MCF 10A (cell line): ENCODE measurements at regions of chr9 and their contacts with region 1.

Region 1: GRCh38 chr9:127611899-127612790 is at the start of gene STXBP1:
- DNase-seq: peak; percentile 81
- H3K4me3 Mint-ChIP-seq: peak within 1 kb of the TSS; percentile 86
- H3K27ac Mint-ChIP-seq: peak within 1 kb of the TSS; percentile 64
- H3K4me1 Mint-ChIP-seq: peaks cover 21% of the 10 kb centered on the region
- H3K27me3 Mint-ChIP-seq: no peaks in the 10 kb centered on the region
- CTCF ChIP-seq: no peak
- total RNA-seq, gene STXBP1: 20.0 and 36.6 TPM in 2 replicates

Region 2: GRCh38 chr9:127537792-127538191 is 74.4 kb before region 1 on chr9:
- CTCF ChIA-PET with region 1: no interaction called
- POLR2A ChIA-PET with region 1: no interaction called
- intact Hi-C with region 1: no loop called
- DNase-seq: peak; percentile 30
- H3K4me3 Mint-ChIP-seq: no peak overlapping the region
- H3K27ac Mint-ChIP-seq: no peak overlapping the region
- H3K4me1 Mint-ChIP-seq: peaks cover 25% of the 10 kb centered on the region
- H3K27me3 Mint-ChIP-seq: no peaks in the 10 kb centered on the region
- CTCF ChIP-seq: peak; percentile 39

Region 3: GRCh38 chr9:127595611-127596010 is 16.5 kb before region 1 on chr9:
- CTCF ChIA-PET with region 1: interaction called, 11 read pairs
- POLR2A ChIA-PET with region 1: interaction called, 14 read pairs
- intact Hi-C with region 1: no loop called
- DNase-seq: no peak
- H3K4me3 Mint-ChIP-seq: no peak overlapping the region
- H3K27ac Mint-ChIP-seq: no peak overlapping the region
- H3K4me1 Mint-ChIP-seq: peaks cover 10% of the 10 kb centered on the region
- H3K27me3 Mint-ChIP-seq: no peaks in the 10 kb centered on the region
- CTCF ChIP-seq: no peak

Region 4: DNA sequence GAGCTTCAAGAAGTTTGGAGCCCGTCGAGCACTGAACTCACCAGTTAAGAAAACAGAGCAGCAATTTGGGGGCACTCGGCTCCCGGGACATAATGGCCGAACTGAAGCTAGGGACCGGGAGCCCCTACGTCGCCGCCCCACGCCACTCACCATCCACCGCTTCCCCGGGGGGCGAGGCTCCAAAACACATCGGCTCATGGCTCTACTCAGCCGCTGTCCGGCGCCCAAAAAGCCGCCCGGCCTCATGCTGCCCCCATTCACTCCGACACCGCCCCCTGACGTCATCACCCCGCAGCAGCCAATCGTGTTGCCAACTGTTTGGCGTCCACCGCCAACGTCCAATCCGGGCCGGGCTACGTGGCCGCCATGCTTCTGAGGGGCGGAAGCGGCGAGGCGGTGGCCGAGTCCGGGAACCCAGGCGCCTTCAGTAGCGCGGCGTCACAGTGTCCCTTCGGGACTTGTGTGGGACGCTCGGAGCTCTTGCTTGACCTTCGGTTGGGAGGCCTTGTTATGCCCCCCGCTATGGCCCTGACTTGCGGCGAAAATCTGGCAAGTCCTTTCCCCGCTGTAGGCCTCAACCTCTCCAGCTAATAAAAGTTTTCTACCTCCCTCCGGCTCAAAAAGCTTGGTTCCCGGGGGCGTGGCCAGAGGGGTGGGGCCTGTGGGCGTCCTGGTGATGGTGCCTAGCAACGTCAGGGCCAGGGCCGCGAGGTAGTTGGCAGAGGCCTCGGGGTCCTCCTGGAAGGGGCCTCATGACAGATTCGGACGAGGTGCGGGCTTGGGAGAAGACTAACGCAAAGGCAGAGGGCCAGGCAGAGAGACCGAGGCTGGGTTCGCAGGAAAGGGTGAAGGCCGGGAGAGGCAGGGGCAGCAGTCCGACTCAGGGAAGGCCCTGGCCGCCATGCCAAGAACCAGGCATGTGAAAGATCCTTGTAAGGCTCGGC is 103.5 kb after region 1 on chr9 and contains the starts of genes PTRH1 and TTC16:
- CTCF ChIA-PET with region 1: no interaction called
- POLR2A ChIA-PET with region 1: interaction called, 13 read pairs
- intact Hi-C with region 1: loop called (anchors 5 kb)
- DNase-seq: peak; percentile 95
- H3K4me3 Mint-ChIP-seq: peak within 1 kb of the TSS; percentile 79
- H3K27ac Mint-ChIP-seq: peak within 1 kb of the TSS; percentile 81
- H3K4me1 Mint-ChIP-seq: peaks cover 13% of the 10 kb centered on the region
- H3K27me3 Mint-ChIP-seq: no peaks in the 10 kb centered on the region
- CTCF ChIP-seq: no peak
- total RNA-seq, gene PTRH1: 35.2 and 37.8 TPM in 2 replicates
- total RNA-seq, gene TTC16: 0.19 and 0.32 TPM in 2 replicates

Region 5: DNA sequence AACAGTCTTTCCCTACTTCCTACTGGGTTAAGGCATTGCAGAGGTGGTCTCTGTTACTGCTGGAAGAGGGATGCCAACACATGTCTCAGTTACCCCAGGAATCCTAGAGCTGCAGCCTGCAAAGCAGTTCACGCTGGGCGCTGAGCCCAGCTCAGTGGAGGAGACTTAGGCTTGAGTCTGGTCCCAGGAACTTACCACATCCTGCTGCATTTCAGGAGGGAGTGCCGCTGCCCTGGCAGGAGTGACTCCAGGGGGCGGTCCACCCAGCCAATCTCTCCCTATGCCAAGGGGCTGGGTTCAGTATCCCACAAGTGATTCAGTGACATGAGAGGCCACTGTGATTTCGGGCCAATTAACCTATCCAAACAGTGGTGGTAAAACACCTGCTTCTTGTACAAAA is 111.3 kb after region 1 on chr9:
- CTCF ChIA-PET with region 1: no interaction called
- POLR2A ChIA-PET with region 1: no interaction called
- intact Hi-C with region 1: loop called (anchors 5 kb)
- DNase-seq: peak; percentile 75
- H3K4me3 Mint-ChIP-seq: no peak overlapping the region
- H3K27ac Mint-ChIP-seq: no peak overlapping the region
- H3K4me1 Mint-ChIP-seq: peaks cover 27% of the 10 kb centered on the region
- H3K27me3 Mint-ChIP-seq: no peaks in the 10 kb centered on the region
- CTCF ChIP-seq: no peak

Region 6: GRCh38 chr9:127746959-127747569 is 134.9 kb after region 1 on chr9:
- CTCF ChIA-PET with region 1: no interaction called
- POLR2A ChIA-PET with region 1: no interaction called
- intact Hi-C with region 1: no loop called
- DNase-seq: no peak
- H3K4me3 Mint-ChIP-seq: no peak overlapping the region
- H3K27ac Mint-ChIP-seq: no peak overlapping the region
- H3K4me1 Mint-ChIP-seq: no peaks in the 10 kb centered on the region
- H3K27me3 Mint-ChIP-seq: peaks cover 37% of the 10 kb centered on the region
- CTCF ChIP-seq: no peak